Naive thymus-derived CD4-positive, alpha-beta T cell (primary cell): ENCODE measurements at regions of chr9 and their contacts with region 1.

Region 1: GRCh38 chr9:36400332-36401163 is 479 bp upstream of the RNF38 start:
- DNase-seq: peak; percentile 83 to 94 (median 91)
- ATAC-seq: peak; percentile 88
- H3K4me3 ChIP-seq: peak overlapping the region; percentile 77
- H3K4me3 Mint-ChIP-seq: peak overlapping the region; percentile 85 to 97 (median 92)
- H3K27ac ChIP-seq: peak overlapping the region; percentile 94
- H3K27ac Mint-ChIP-seq: peak overlapping the region; percentile 92 to 98 (median 95)
- H3K4me1 ChIP-seq: peaks cover 16 to 26% of the 10 kb centered on the region in 2 donors
- H3K4me1 Mint-ChIP-seq: peaks cover 32 to 60% (median 54%) of the 10 kb centered on the region in 7 donors
- H3K27me3 ChIP-seq: no peaks in the 10 kb centered on the region
- H3K27me3 Mint-ChIP-seq: peaks cover 0 to 2% (median 0%) of the 10 kb centered on the region in 5 donors

Region 2: GRCh38 chr9:35161713-35162604 is 1238.6 kb before region 1 on chr9 and contains the start of gene UNC13B:
- CTCF ChIA-PET with region 1: no interaction called
- POLR2A ChIA-PET with region 1: no interaction called
- intact Hi-C with region 1: loop called in 1 of 2 experiments (anchors 10 kb)
- DNase-seq: peak; percentile 46 to 75 (median 60)
- ATAC-seq: peak; percentile 94
- H3K4me3 ChIP-seq: peak within 1 kb of the TSS; percentile 57
- H3K4me3 Mint-ChIP-seq: peak within 1 kb of the TSS; percentile 91 to 97 (median 93)
- H3K27ac ChIP-seq: peak within 1 kb of the TSS; percentile 9
- H3K27ac Mint-ChIP-seq: peak within 1 kb of the TSS in 8 of 9 donors; percentile 17 to 86 (median 48)
- H3K4me1 ChIP-seq: no peaks in the 10 kb centered on the region
- H3K4me1 Mint-ChIP-seq: peaks cover 0 to 40% (median 32%) of the 10 kb centered on the region in 7 donors
- H3K27me3 ChIP-seq: no peaks in the 10 kb centered on the region
- H3K27me3 Mint-ChIP-seq: peaks cover 0 to 31% (median 0%) of the 10 kb centered on the region in 5 donors
- total RNA-seq, gene UNC13B: 0.24 to 1.6 (median 1.3) TPM

Region 3: GRCh38 chr9:35423499-35423898 is 977.0 kb before region 1 on chr9:
- CTCF ChIA-PET with region 1: no interaction called
- POLR2A ChIA-PET with region 1: no interaction called
- intact Hi-C with region 1: no loop called
- DNase-seq: no peak
- ATAC-seq: no peak
- H3K4me3 ChIP-seq: no peak overlapping the region
- H3K4me3 Mint-ChIP-seq: no peak overlapping the region
- H3K27ac ChIP-seq: no peak overlapping the region
- H3K27ac Mint-ChIP-seq: no peak overlapping the region
- H3K4me1 ChIP-seq: no peaks in the 10 kb centered on the region
- H3K4me1 Mint-ChIP-seq: no peaks in the 10 kb centered on the region
- H3K27me3 ChIP-seq: no peaks in the 10 kb centered on the region
- H3K27me3 Mint-ChIP-seq: peaks cover 23 to 54% (median 38%) of the 10 kb centered on the region in 5 donors

Region 4: GRCh38 chr9:36258208-36258988 is 142.2 kb before region 1 on chr9 and contains the start of gene GNE:
- CTCF ChIA-PET with region 1: no interaction called
- POLR2A ChIA-PET with region 1: interaction called, 5 read pairs
- intact Hi-C with region 1: loop called (anchors 1 to 2 kb)
- DNase-seq: peak; percentile 92 to 99 (median 96)
- ATAC-seq: peak; percentile 96
- H3K4me3 ChIP-seq: peak within 1 kb of the TSS; percentile 98
- H3K4me3 Mint-ChIP-seq: peak within 1 kb of the TSS; percentile 96 to 100 (median 98)
- H3K27ac ChIP-seq: peak within 1 kb of the TSS; percentile 93
- H3K27ac Mint-ChIP-seq: peak within 1 kb of the TSS; percentile 92 to 98 (median 96)
- H3K4me1 ChIP-seq: peaks cover 7 to 9% of the 10 kb centered on the region in 2 donors
- H3K4me1 Mint-ChIP-seq: peaks cover 0 to 14% (median 12%) of the 10 kb centered on the region in 7 donors
- H3K27me3 ChIP-seq: no peaks in the 10 kb centered on the region
- H3K27me3 Mint-ChIP-seq: peaks cover 0 to 2% (median 0%) of the 10 kb centered on the region in 5 donors
- total RNA-seq, gene GNE: 12.6 to 18.5 (median 16.0) TPM

Region 5: DNA sequence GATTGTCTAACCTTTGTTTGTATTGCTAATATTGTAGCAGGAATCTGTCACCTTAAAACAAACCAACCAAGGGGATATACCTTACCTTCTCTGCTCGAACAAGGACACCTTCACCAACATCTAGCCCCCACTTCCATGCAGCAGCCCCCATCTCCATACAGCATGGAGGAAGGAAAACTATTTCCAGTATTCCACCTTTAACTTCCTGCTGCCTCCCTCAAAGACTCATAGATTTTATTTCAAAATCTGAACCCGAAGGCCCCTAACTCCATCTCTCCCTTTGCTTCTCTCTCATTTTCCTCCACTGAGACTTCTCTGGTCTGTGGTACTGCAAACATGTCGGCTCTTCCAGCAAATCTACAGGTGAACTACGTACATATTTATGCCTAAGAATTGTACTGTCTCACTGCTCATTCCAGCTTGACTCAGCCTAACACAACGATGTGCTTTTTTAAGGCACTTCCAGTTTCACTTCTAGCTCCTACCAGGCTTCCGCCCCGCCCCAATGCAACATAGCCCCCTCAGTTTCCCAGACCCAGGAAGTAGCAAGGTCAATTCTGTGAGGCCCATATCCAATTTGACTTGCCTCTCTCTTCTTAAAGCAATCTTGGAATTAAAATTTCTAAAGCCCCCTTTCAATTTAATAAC is 70.2 kb after region 1 on chr9:
- CTCF ChIA-PET with region 1: no interaction called
- POLR2A ChIA-PET with region 1: no interaction called
- intact Hi-C with region 1: loop called in 1 of 2 experiments (anchors 2 kb)
- DNase-seq: peak in 8 of 9 donors; percentile 41 to 70 (median 60)
- ATAC-seq: peak; percentile 95
- H3K4me3 ChIP-seq: peak overlapping the region; percentile 51
- H3K4me3 Mint-ChIP-seq: peak overlapping the region; percentile 79 to 94 (median 86)
- H3K27ac ChIP-seq: peak overlapping the region; percentile 74
- H3K27ac Mint-ChIP-seq: peak overlapping the region; percentile 92 to 97 (median 96)
- H3K4me1 ChIP-seq: peaks cover 16 to 27% of the 10 kb centered on the region in 2 donors
- H3K4me1 Mint-ChIP-seq: peaks cover 27 to 52% (median 42%) of the 10 kb centered on the region in 7 donors
- H3K27me3 ChIP-seq: no peaks in the 10 kb centered on the region
- H3K27me3 Mint-ChIP-seq: no peaks in the 10 kb centered on the region

Region 6: GRCh38 chr9:36765468-36766341 is 365.2 kb after region 1 on chr9:
- CTCF ChIA-PET with region 1: no interaction called
- POLR2A ChIA-PET with region 1: no interaction called
- intact Hi-C with region 1: loop called in 1 of 2 experiments (anchors 1 kb)
- DNase-seq: peak; percentile 81 to 96 (median 91)
- ATAC-seq: peak; percentile 100
- H3K4me3 ChIP-seq: peak overlapping the region; percentile 56
- H3K4me3 Mint-ChIP-seq: no peak overlapping the region
- H3K27ac ChIP-seq: peak overlapping the region; percentile 56
- H3K27ac Mint-ChIP-seq: no peak overlapping the region
- H3K4me1 ChIP-seq: no peaks in the 10 kb centered on the region
- H3K4me1 Mint-ChIP-seq: peaks cover 0 to 6% (median 2%) of the 10 kb centered on the region in 7 donors
- H3K27me3 ChIP-seq: no peaks in the 10 kb centered on the region
- H3K27me3 Mint-ChIP-seq: peaks cover 0 to 16% (median 11%) of the 10 kb centered on the region in 5 donors